ENCODE measurements at regions of chr15 and their contacts with region 1.

Region 1: DNA sequence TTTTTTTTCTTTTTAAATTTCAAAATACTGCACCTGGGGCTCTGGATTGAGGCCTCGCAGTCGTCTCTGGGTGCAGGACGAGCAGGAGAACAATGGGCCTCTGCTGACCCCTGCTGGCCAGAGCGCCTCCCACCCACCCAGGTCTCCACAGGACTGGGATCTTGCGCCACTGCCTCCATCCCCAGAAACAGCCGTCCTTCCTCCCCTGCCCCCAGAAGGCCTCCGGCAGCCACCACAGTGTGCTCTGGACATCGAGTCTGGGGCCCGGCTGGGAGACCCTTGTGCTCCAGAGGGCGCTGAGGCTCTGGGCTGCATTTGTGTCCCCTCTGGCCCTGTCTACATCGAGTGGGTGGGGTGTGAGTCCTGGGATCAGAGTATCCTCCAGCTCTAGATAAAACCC is 6.6 kb upstream of the ACSBG1 start:
- DNase-seq: peak; percentile 89
- ATAC-seq: peak; percentile 98
- H3K4me3 Mint-ChIP-seq: no peak overlapping the region
- H3K27ac Mint-ChIP-seq: no peak overlapping the region
- H3K4me1 Mint-ChIP-seq: peaks cover 1% of the 10 kb centered on the region
- H3K27me3 Mint-ChIP-seq: peaks cover 1% of the 10 kb centered on the region
- CTCF ChIP-seq: peak; percentile 80

Region 2: GRCh38 chr15:77959432-77959879 is 281.6 kb before region 1 on chr15:
- CTCF ChIA-PET with region 1: interaction called, 23 read pairs
- POLR2A ChIA-PET with region 1: no interaction called
- intact Hi-C with region 1: loop called (anchors 2 kb)
- DNase-seq: peak; percentile 84
- ATAC-seq: peak; percentile 100
- H3K4me3 Mint-ChIP-seq: peak overlapping the region; percentile 54
- H3K27ac Mint-ChIP-seq: no peak overlapping the region
- H3K4me1 Mint-ChIP-seq: peaks cover 2% of the 10 kb centered on the region
- H3K27me3 Mint-ChIP-seq: peaks cover 7% of the 10 kb centered on the region
- CTCF ChIP-seq: peak; percentile 98

Region 3: DNA sequence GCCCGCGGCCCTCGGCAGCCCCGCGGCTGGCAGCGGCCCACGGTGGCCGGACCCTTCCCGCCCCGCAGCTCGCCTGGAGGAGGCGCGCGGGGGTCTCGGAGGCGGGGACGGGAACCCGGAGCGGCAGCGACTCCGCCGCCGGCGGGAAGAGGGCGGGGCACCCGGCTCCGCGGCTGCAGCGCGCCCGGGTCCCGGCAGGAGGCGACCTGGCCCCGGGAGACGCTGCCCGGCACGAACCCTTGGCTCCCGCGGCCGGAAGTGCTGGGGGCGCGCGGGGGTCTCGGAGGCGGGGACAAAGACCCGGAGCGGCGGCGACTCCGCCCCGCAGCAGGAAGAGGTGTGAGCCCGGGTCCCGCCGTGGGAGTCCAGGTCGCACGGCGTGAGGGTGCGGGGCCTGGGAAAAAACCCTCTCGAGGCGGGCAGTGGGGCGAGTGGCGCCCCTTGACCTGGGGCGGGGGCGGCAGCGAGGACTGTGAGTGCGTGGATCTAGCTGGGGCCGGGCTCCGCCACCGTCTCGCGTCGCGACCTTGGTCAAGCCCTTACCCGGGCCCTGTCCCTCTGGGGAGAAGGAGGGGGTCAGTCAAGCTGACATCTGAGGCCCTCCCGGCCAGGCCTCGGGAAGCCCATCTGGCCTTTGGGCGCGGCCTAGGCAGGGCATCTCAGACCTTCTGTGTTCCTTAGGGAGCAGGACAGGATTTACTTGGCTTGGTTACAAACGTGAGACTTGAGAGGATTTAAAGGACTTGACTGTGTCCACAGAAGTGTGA is 109.5 kb before region 1 on chr15 and contains the start of gene CIB2:
- CTCF ChIA-PET with region 1: interaction called, 26 read pairs
- POLR2A ChIA-PET with region 1: interaction called, 3 read pairs
- intact Hi-C with region 1: loop called (anchors 5 kb)
- DNase-seq: peak; percentile 78
- ATAC-seq: peak; percentile 94
- H3K4me3 Mint-ChIP-seq: peak within 1 kb of the TSS; percentile 79
- H3K27ac Mint-ChIP-seq: peak within 1 kb of the TSS; percentile 60
- H3K4me1 Mint-ChIP-seq: peaks cover 22% of the 10 kb centered on the region
- H3K27me3 Mint-ChIP-seq: peaks cover 1% of the 10 kb centered on the region
- CTCF ChIP-seq: peak; percentile 89
- total RNA-seq, gene CIB2: 1.6 TPM

Region 4: GRCh38 chr15:78177447-78177873 is 63.5 kb before region 1 on chr15:
- CTCF ChIA-PET with region 1: interaction called, 26 read pairs
- POLR2A ChIA-PET with region 1: no interaction called
- intact Hi-C with region 1: no loop called
- DNase-seq: peak; percentile 64
- ATAC-seq: peak; percentile 60
- H3K4me3 Mint-ChIP-seq: no peak overlapping the region
- H3K27ac Mint-ChIP-seq: no peak overlapping the region
- H3K4me1 Mint-ChIP-seq: peaks cover 19% of the 10 kb centered on the region
- H3K27me3 Mint-ChIP-seq: no peaks in the 10 kb centered on the region
- CTCF ChIP-seq: peak; percentile 62

Region 5: DNA sequence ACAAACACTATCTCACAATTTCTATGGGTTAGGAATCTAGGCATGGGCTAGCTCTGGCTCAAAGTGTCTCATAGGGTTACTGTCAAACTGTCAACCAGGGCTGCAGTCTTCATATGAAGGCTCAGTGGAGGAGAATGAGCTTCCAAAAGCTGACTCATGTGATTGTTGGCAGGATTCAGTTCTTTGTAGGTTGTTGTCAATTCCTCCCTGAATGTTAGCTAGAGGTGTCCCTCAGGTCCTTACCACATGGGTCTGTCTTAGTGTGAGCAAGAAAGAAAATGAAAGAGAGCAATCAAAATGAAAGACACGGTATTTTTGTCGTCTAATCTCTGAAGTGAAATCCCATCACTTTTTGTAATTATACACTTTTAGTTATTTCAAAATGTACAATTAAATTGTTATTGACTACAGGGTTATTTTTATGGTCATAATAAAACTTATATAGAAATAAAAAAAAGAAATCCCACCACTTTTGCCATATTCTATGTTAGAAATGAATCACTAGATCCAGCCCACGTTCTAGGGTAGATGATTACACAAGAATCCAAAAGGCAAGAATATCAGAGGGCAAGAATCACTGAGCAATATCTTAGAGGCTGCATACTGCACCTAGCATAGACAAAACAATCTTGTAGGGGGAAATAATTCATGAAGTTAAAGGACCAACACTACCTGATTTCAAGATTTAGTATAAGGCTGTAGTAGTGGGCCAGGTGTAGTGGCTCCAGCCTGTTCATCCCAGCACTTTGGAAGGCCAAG is 15.0 kb before region 1 on chr15:
- CTCF ChIA-PET with region 1: interaction called, 22 read pairs
- POLR2A ChIA-PET with region 1: no interaction called
- intact Hi-C with region 1: no loop called
- DNase-seq: no peak
- ATAC-seq: peak; percentile 78
- H3K4me3 Mint-ChIP-seq: no peak overlapping the region
- H3K27ac Mint-ChIP-seq: no peak overlapping the region
- H3K4me1 Mint-ChIP-seq: peaks cover 7% of the 10 kb centered on the region
- H3K27me3 Mint-ChIP-seq: no peaks in the 10 kb centered on the region
- CTCF ChIP-seq: no peak